T-cell (primary cell): ENCODE measurements at regions of chr15 and their contacts with region 1.

Region 1: DNA sequence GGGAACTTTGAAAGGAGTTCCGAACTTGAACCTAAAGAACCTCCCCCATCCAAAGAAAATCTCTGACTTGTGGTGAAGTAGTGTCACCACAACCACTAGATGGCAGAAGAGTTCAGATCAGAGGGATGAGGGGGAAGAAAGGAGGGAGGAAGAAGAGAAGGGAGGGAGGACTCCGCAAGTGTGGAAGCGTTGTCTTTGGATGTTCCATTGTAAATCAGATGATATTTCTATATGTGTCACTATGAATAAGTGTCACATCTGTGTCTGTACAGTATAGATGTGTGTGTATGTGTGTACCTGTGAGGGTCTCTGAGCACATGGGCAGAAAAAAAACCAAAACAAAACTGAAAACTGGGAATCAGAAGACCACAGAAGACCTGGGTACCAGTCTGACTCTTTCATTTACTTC is 16.9 kb downstream of the SLC24A1 start:
- DNase-seq: peak in 24 of 35 experiments; percentile 6 to 83 (median 20)
- ATAC-seq: peak; percentile 57 to 85 (median 76)
- H3K4me3 ChIP-seq: no peak overlapping the region
- H3K4me3 Mint-ChIP-seq: no peak overlapping the region
- H3K27ac ChIP-seq: no peak overlapping the region
- H3K27ac Mint-ChIP-seq: no peak overlapping the region
- H3K4me1 ChIP-seq: no peaks in the 10 kb centered on the region
- H3K4me1 Mint-ChIP-seq: peaks cover 7 to 13% (median 12%) of the 10 kb centered on the region in 3 donors
- H3K27me3 ChIP-seq: no peaks in the 10 kb centered on the region
- H3K27me3 Mint-ChIP-seq: no peaks in the 10 kb centered on the region

Region 2: GRCh38 chr15:65133548-65134200 is 505.0 kb before region 1 on chr15 and contains the start of gene PDCD7:
- CTCF ChIA-PET with region 1: no interaction called
- POLR2A ChIA-PET with region 1: interaction called in 1 of 2 experiments, 13 read pairs
- DNase-seq: peak; percentile 56 to 95 (median 83)
- ATAC-seq: peak; percentile 92 to 97 (median 94)
- H3K4me3 ChIP-seq: peak within 1 kb of the TSS; percentile 55 to 90
- H3K4me3 Mint-ChIP-seq: peak within 1 kb of the TSS; percentile 89 to 95 (median 90)
- H3K27ac ChIP-seq: peak within 1 kb of the TSS; percentile 67
- H3K27ac Mint-ChIP-seq: peak within 1 kb of the TSS; percentile 84 to 90
- H3K4me1 ChIP-seq: peaks cover 3 to 24% of the 10 kb centered on the region in 2 experiments
- H3K4me1 Mint-ChIP-seq: peaks cover 34 to 38% (median 38%) of the 10 kb centered on the region in 3 donors
- H3K27me3 ChIP-seq: peaks cover 0 to 3% of the 10 kb centered on the region in 2 experiments
- H3K27me3 Mint-ChIP-seq: no peaks in the 10 kb centered on the region
- total RNA-seq, gene PDCD7: 33.2 to 43.6 (median 36.7) TPM

Region 3: GRCh38 chr15:65837301-65838294 is 198.9 kb after region 1 on chr15:
- CTCF ChIA-PET with region 1: interaction called in 1 of 2 experiments, 13 read pairs
- POLR2A ChIA-PET with region 1: no interaction called
- DNase-seq: no peak
- ATAC-seq: no peak
- H3K4me3 ChIP-seq: no peak overlapping the region
- H3K4me3 Mint-ChIP-seq: no peak overlapping the region
- H3K27ac ChIP-seq: no peak overlapping the region
- H3K27ac Mint-ChIP-seq: peak overlapping the region in 1 of 2 donors; percentile 7
- H3K4me1 ChIP-seq: peaks cover 14 to 21% of the 10 kb centered on the region in 2 experiments
- H3K4me1 Mint-ChIP-seq: peaks cover 24 to 26% (median 24%) of the 10 kb centered on the region in 3 donors
- H3K27me3 ChIP-seq: no peaks in the 10 kb centered on the region
- H3K27me3 Mint-ChIP-seq: no peaks in the 10 kb centered on the region

Region 4: DNA sequence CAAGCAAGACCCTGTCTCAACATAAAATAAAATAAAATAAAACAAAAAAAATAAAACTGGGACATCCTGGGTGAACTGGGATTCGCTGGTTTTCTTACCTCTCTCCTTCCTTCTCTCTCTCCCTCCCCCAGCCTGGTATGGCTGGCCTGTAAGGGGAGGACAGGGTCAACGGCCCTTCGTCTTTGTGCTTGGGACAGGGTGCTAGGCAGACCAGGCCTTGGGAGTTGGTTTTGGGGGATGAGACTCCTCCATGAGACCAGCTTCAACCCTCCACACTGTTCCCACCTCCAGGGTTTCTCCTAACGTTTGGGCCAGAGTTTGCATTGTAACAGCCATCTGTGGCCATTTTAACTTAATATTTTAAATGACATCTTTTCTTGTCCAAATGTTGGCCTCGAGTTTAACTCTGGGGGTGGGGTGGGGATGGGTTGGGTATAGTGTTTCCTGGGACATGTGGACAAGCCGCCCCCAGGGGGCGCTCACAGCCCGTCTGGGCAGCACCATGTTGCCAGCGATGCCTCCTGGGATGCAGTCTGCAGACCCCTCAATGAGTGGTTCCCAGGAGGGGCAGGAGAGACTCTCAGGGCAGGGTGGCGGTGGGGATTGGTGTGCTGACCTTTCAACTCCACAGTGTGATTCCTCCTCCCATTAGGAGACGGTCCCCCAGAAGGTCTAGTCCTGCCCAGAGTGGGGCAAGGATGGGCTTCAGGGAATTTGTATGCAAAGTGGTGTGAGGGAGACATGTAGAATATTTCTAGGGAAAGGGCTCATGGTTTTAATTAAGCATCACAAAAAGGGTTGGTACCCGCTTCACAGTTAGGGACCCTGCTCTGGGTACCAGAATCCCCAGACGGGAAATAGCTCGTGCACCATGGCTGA is 964.9 kb after region 1 on chr15:
- CTCF ChIA-PET with region 1: no interaction called
- POLR2A ChIA-PET with region 1: no interaction called
- DNase-seq: peak; percentile 12 to 77 (median 49)
- ATAC-seq: peak; percentile 59 to 70 (median 66)
- H3K4me3 ChIP-seq: no peak overlapping the region
- H3K4me3 Mint-ChIP-seq: no peak overlapping the region
- H3K27ac ChIP-seq: no peak overlapping the region
- H3K27ac Mint-ChIP-seq: no peak overlapping the region
- H3K4me1 ChIP-seq: peaks cover 0 to under 1% of the 10 kb centered on the region in 2 experiments
- H3K4me1 Mint-ChIP-seq: peaks cover under 1 to 2% (median 1%) of the 10 kb centered on the region in 3 donors
- H3K27me3 ChIP-seq: peaks cover 0 to 40% of the 10 kb centered on the region in 2 experiments
- H3K27me3 Mint-ChIP-seq: peaks cover 0 to 10% of the 10 kb centered on the region in 2 donors